A673 (cell line): ENCODE measurements at regions of chr18 and their contacts with region 1.

Region 1: DNA sequence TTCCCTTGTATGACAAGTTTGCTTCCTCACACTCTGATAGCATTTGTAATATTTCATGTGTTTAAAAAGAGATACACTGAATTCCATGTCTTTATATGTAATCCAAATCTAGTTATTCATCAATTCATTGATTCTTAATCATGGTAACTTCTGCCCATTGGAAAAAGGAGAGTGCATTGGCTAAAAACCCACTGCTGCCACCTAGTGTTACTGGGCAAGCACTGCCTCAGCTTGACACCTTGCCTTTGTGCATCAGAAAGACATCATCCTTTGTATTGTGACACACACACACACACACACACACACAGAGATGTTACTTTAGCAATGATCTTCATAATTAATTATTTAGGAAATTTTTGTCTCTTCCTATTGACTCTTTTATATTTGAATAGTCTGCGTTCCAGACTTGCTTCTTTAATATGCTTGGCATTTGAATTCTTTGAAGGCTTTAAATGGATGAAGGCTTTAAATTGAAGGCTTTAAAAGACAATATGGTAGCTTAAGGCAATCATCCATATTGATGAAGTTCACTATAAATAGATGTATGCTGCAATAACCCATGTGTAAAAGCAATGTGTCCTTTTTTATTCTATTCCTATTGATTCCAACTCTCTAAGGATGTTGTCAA is 414.2 kb upstream of the CHST9 start:
- DNase-seq: peak; percentile 58
- H3K4me3 ChIP-seq: no peak overlapping the region
- H3K27ac ChIP-seq: no peak overlapping the region
- H3K4me1 ChIP-seq: no peaks in the 10 kb centered on the region
- H3K27me3 ChIP-seq: peaks cover 9% of the 10 kb centered on the region
- CTCF ChIP-seq: peak; percentile 91

Region 2: GRCh38 chr18:26307189-26307773 is 1292.0 kb before region 1 on chr18:
- CTCF ChIA-PET with region 1: interaction called, 5 read pairs
- POLR2A ChIA-PET with region 1: no interaction called
- intact Hi-C with region 1: loop called (anchors 5 kb)
- DNase-seq: peak; percentile 54
- H3K4me3 ChIP-seq: no peak overlapping the region
- H3K27ac ChIP-seq: no peak overlapping the region
- H3K4me1 ChIP-seq: no peaks in the 10 kb centered on the region
- H3K27me3 ChIP-seq: no peaks in the 10 kb centered on the region
- CTCF ChIP-seq: peak; percentile 70

Region 3: DNA sequence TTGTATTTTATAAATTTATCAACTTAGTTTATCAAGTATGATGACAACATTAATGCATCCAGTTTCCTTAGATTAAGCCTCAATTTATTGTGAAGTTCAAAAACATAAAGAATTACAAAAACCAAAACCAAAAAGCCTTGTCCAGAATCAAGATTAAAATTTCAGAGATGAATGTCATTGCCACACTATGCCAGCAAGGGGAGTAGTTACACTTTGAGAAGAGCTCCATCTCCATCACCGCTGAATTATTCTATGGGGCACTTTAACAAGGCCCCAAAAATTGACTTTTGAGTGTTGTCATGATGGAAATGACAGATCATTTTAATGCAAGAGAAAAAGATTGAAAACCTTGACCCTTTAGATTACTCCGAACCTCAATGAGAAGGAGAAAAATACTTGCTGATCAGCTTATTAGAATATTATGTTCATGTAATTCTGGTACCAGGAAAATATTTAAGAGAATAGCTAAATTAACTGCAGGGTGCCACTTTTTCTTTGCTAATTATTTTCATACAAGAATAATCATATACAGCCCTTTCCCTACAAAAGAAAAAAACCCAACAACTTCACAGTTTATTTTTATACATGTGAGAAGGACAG is 581.3 kb before region 1 on chr18:
- CTCF ChIA-PET with region 1: no interaction called
- POLR2A ChIA-PET with region 1: no interaction called
- intact Hi-C with region 1: loop called (anchors 2 kb)
- DNase-seq: peak; percentile 22
- H3K4me3 ChIP-seq: no peak overlapping the region
- H3K27ac ChIP-seq: no peak overlapping the region
- H3K4me1 ChIP-seq: no peaks in the 10 kb centered on the region
- H3K27me3 ChIP-seq: no peaks in the 10 kb centered on the region
- CTCF ChIP-seq: peak; percentile 50

Region 4: DNA sequence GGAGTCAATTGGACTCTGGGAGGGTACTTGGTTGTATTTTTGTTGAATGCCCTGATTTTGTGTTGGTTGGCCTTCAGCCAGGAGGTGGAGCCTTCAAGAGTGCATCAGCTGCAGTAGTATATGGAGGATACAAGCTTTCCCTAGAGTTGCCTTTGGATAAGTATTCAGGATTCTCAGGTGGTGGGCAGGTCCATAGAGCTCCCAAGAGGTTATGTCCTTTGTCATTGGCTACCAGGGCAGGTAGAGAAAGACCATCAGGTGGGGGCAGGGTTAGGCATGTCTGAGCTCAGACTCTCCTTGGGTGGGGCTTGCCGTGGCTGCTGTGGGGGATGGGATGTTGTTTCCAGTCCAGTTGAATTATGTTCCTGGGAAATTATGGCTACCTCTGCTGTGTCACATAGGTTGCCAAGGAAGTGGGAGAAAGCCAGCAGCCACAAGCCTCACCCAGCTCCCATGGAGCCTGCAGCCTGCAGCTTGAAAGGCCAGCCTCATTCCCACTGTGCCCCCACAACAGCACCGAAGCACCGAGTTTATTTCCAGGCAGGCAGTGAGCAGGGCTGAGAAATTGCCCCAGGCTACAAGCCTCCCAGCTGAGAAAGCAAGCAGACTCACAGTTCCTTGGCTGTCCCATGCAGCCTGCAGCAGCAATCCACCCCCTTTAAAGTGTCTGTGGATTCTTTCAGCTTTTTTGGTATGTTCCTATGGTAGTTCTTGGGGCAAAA is 375.6 kb before region 1 on chr18:
- CTCF ChIA-PET with region 1: no interaction called
- POLR2A ChIA-PET with region 1: no interaction called
- intact Hi-C with region 1: no loop called
- DNase-seq: no peak
- H3K4me3 ChIP-seq: no peak overlapping the region
- H3K27ac ChIP-seq: no peak overlapping the region
- H3K4me1 ChIP-seq: no peaks in the 10 kb centered on the region
- H3K27me3 ChIP-seq: no peaks in the 10 kb centered on the region
- CTCF ChIP-seq: no peak

Region 5: DNA sequence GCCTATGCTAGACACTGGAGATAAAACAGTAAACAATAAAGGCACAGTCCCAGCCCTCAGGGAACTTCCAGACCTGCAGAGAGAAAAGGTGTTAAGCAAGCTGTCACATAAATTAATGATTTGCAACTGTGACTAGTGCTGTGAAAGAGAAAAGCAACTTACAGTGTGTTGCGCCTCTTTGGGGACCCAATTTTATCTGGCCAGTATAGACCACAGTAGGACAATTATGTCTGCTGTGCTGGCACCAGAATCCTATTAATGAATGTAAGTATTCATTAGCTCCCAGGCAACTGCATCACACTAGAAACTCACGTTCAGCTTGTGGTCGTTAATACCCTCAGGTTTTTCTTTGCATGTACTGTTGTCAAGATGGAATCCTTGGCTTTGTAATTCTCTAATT is 358.9 kb before region 1 on chr18:
- CTCF ChIA-PET with region 1: no interaction called
- POLR2A ChIA-PET with region 1: no interaction called
- intact Hi-C with region 1: loop called (anchors 10 kb)
- DNase-seq: no peak
- H3K4me3 ChIP-seq: no peak overlapping the region
- H3K27ac ChIP-seq: no peak overlapping the region
- H3K4me1 ChIP-seq: no peaks in the 10 kb centered on the region
- H3K27me3 ChIP-seq: no peaks in the 10 kb centered on the region
- CTCF ChIP-seq: no peak

Region 6: DNA sequence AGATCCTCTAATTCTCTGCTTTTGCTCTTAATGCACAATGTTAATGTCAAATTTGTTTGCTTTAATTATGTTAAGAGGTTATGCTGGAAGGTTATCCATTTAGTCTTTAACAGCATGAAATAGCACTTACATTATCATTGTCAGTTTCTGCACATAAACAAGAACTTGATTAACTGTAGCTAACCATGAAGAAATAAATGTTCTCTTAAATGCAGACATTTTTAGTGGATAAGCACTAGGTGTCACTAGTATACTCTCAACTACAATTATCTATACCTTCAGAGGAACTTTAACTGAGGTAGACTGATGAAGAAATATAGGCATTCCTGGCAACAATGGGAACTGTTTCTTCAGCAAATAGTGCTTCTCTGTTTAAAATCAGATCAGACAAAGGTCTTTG is 235.4 kb before region 1 on chr18:
- CTCF ChIA-PET with region 1: interaction called, 3 read pairs
- POLR2A ChIA-PET with region 1: no interaction called
- intact Hi-C with region 1: loop called (anchors 2 kb)
- DNase-seq: peak; percentile 4
- H3K4me3 ChIP-seq: no peak overlapping the region
- H3K27ac ChIP-seq: no peak overlapping the region
- H3K4me1 ChIP-seq: no peaks in the 10 kb centered on the region
- H3K27me3 ChIP-seq: peaks cover 8% of the 10 kb centered on the region
- CTCF ChIP-seq: peak; percentile 31; the same call in 1 of the 2 replicates